ENCODE measurements at regions of chr11 and their contacts with region 1.

Region 1: DNA sequence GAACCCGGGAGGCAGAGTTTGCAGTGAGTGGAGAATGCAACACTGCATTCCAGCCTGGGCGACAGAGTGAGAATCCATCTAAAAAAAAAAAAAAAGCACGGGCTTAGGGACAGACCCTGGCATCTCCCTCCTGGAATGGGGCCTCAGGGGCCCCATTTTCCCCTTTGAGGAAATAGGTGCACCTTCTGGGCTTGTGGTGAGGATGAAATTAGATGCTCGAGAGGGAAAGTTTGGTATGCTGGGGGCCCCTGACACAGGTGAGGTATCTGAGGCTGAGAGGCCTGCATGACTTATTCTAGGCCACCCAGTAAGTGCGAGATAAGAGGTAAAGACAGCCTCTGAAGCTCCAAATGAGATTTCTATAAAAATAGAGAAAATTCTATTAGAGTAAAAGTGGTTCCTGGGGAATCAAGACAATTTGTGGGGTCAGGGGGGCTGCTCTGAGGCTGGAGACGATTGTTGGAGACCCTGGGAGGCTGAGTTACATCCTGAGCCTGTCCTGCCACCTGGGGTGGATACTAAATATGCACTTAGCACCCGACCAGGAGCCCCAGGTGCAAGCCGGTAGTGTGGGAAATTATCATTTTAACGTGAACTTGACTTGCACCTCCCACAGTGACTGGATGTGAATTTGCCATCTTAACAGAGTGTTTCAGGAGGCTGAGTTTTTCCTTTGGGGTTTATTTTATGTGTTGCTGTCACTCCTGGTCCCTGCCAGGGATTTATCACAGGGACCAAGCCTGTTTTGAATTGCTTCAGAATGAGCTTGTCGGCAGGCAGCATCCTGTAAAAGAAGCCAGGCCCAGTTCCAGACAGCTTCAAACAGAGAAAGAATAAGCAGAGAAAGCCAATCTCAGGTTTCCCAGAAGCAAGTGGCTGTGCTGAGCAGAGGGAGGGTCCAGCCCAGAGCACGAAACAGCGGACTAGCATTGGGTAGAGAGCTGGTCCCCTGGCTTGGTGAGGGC is 48.4 kb upstream of the TSKU start:
- DNase-seq: peak in 1 of 4 experiments; percentile 18
- ATAC-seq: peak; percentile 6; the same call in 2 of the 3 replicates
- H3K4me3 ChIP-seq: no peak overlapping the region
- H3K27ac ChIP-seq: no peak overlapping the region
- H3K4me1 ChIP-seq: peaks cover 29 to 35% of the 10 kb centered on the region in 2 experiments
- H3K27me3 ChIP-seq: no peaks in the 10 kb centered on the region
- CTCF ChIP-seq: no peak
- EP300 ChIP-seq: no peak
- POLR2A ChIP-seq: no peak
- RAD21 ChIP-seq: no peak

Region 2: GRCh38 chr11:75814686-75815344 is 919.9 kb before region 1 on chr11 and contains the start of gene UVRAG:
- CTCF ChIA-PET with region 1: no interaction called
- POLR2A ChIA-PET with region 1: no interaction called
- in situ Hi-C with region 1: no loop called
- intact Hi-C with region 1: no loop called
- DNase-seq: peak; percentile 98 to 100 (median 98)
- ATAC-seq: peak; percentile 96
- H3K4me3 ChIP-seq: peak within 1 kb of the TSS; percentile 87
- H3K27ac ChIP-seq: peak within 1 kb of the TSS; percentile 79
- H3K4me1 ChIP-seq: peaks cover 14 to 28% of the 10 kb centered on the region in 2 experiments
- H3K27me3 ChIP-seq: no peaks in the 10 kb centered on the region
- CTCF ChIP-seq: peak in 1 of 3 experiments; percentile 9; a peak in 1 of 6 replicates
- EP300 ChIP-seq: no peak; the same call in 1 of the 2 replicates
- POLR2A ChIP-seq: peak; percentile 87
- RAD21 ChIP-seq: no peak; a peak in 1 of 4 replicates
- polyA plus RNA-seq, gene UVRAG: 3.1 to 5.2 TPM

Region 3: GRCh38 chr11:76397383-76397782 is 337.4 kb before region 1 on chr11:
- CTCF ChIA-PET with region 1: no interaction called
- POLR2A ChIA-PET with region 1: no interaction called
- in situ Hi-C with region 1: no loop called
- intact Hi-C with region 1: no loop called
- DNase-seq: no peak
- ATAC-seq: no peak
- H3K4me3 ChIP-seq: no peak overlapping the region
- H3K27ac ChIP-seq: no peak overlapping the region
- H3K4me1 ChIP-seq: no peaks in the 10 kb centered on the region
- H3K27me3 ChIP-seq: peaks cover 2 to 6% of the 10 kb centered on the region in 2 experiments; a peak in 3 of 5 replicates
- CTCF ChIP-seq: no peak
- EP300 ChIP-seq: no peak
- POLR2A ChIP-seq: no peak
- RAD21 ChIP-seq: no peak

Region 4: GRCh38 chr11:76700177-76701100 is 34.3 kb before region 1 on chr11:
- CTCF ChIA-PET with region 1: no interaction called
- POLR2A ChIA-PET with region 1: interaction called, 3 read pairs
- in situ Hi-C with region 1: no loop called
- intact Hi-C with region 1: loop called (anchors 1 kb)
- DNase-seq: peak; percentile 91 to 96 (median 92)
- ATAC-seq: peak; percentile 83
- H3K4me3 ChIP-seq: no peak overlapping the region
- H3K27ac ChIP-seq: peak overlapping the region; percentile 90
- H3K4me1 ChIP-seq: peaks cover 61 to 67% of the 10 kb centered on the region in 2 experiments
- H3K27me3 ChIP-seq: no peaks in the 10 kb centered on the region
- CTCF ChIP-seq: no peak
- EP300 ChIP-seq: peak; percentile 97
- POLR2A ChIP-seq: peak; percentile 37; the same call in 1 of the 2 replicates
- RAD21 ChIP-seq: 0 out of 4 replicates have a peak, but pooled peaks of 1 of the 2 experiments have one; percentile 2

Region 5: DNA sequence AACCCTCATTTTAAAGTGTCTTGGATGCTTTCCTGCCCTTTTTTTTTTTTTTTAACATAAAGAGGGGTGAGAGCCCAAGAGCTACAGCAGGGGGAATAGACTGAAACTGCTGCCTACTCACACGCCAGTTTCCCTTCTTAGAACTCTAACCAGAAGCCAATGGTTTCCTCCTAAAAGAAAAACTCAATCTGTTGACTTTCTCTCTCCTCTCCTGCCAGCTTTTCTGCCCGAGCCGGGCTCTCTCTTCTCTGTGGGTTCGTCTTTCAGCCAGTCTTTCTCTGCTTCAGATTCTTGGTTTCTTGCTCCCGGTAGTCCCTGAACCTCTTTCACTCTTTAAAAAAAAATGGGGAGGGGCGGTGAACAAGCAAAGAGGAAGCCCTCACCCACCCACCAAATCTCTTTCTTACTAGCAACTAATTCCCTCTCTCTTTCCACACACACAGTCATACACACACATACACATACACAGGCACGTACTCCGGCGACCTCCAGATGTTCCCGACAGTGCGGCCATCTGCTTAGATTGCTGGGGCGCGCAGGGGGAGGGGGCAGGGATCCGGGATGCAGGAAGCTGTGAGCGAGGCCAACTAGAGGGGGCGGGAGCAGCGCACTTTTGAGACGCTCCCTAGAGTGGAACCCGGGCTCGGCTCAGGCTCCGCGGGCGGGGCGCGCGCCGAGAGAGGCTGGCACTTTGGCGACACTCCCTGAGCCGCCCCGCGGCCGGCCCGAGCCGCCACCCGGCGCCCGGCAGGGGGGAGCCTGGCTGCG is 48.0 kb after region 1 on chr11:
- CTCF ChIA-PET with region 1: interaction called, 3 read pairs
- POLR2A ChIA-PET with region 1: interaction called, 5 read pairs
- in situ Hi-C with region 1: loop called (anchors 5 kb)
- intact Hi-C with region 1: no loop called
- DNase-seq: peak; percentile 92 to 95 (median 92)
- ATAC-seq: peak; percentile 78
- H3K4me3 ChIP-seq: peak overlapping the region; percentile 71
- H3K27ac ChIP-seq: peak overlapping the region; percentile 50; the same call in 2 of the 3 replicates
- H3K4me1 ChIP-seq: peaks cover 33 to 49% of the 10 kb centered on the region in 2 experiments
- H3K27me3 ChIP-seq: no peaks in the 10 kb centered on the region
- CTCF ChIP-seq: no peak; a peak in 1 of 6 replicates
- EP300 ChIP-seq: no peak; the same call in 1 of the 2 replicates
- POLR2A ChIP-seq: peak; percentile 76
- RAD21 ChIP-seq: no peak

Region 6: GRCh38 chr11:76807206-76807875 is 72.6 kb after region 1 on chr11:
- CTCF ChIA-PET with region 1: interaction called, 3 read pairs
- POLR2A ChIA-PET with region 1: interaction called, 4 read pairs
- in situ Hi-C with region 1: no loop called
- intact Hi-C with region 1: loop called (anchors 2 kb)
- DNase-seq: peak; percentile 84 to 92 (median 86)
- ATAC-seq: peak; percentile 98
- H3K4me3 ChIP-seq: no peak overlapping the region
- H3K27ac ChIP-seq: no peak overlapping the region
- H3K4me1 ChIP-seq: peaks cover 10 to 20% of the 10 kb centered on the region in 2 experiments; a peak in 4 of 5 replicates
- H3K27me3 ChIP-seq: no peaks in the 10 kb centered on the region
- CTCF ChIP-seq: peak; percentile 85 to 89 (median 89)
- EP300 ChIP-seq: no peak
- POLR2A ChIP-seq: no peak
- RAD21 ChIP-seq: peak; percentile 71 to 86

Region 7: GRCh38 chr11:76860539-76861475 is 126.1 kb after region 1 on chr11 and contains the start of gene ACER3:
- CTCF ChIA-PET with region 1: no interaction called
- POLR2A ChIA-PET with region 1: no interaction called
- in situ Hi-C with region 1: no loop called
- intact Hi-C with region 1: no loop called
- DNase-seq: peak; percentile 96 to 99 (median 99)
- ATAC-seq: peak; percentile 97
- H3K4me3 ChIP-seq: peak within 1 kb of the TSS; percentile 94
- H3K27ac ChIP-seq: peak within 1 kb of the TSS; percentile 88
- H3K4me1 ChIP-seq: peaks cover 16 to 23% of the 10 kb centered on the region in 2 experiments; a peak in 4 of 5 replicates
- H3K27me3 ChIP-seq: no peaks in the 10 kb centered on the region
- CTCF ChIP-seq: peak in 1 of 3 experiments; percentile 26; a peak in 1 of 6 replicates
- EP300 ChIP-seq: no peak
- POLR2A ChIP-seq: peak; percentile 83
- RAD21 ChIP-seq: no peak
- polyA plus RNA-seq, gene ACER3: 2.0 to 3.0 TPM

Region 8: DNA sequence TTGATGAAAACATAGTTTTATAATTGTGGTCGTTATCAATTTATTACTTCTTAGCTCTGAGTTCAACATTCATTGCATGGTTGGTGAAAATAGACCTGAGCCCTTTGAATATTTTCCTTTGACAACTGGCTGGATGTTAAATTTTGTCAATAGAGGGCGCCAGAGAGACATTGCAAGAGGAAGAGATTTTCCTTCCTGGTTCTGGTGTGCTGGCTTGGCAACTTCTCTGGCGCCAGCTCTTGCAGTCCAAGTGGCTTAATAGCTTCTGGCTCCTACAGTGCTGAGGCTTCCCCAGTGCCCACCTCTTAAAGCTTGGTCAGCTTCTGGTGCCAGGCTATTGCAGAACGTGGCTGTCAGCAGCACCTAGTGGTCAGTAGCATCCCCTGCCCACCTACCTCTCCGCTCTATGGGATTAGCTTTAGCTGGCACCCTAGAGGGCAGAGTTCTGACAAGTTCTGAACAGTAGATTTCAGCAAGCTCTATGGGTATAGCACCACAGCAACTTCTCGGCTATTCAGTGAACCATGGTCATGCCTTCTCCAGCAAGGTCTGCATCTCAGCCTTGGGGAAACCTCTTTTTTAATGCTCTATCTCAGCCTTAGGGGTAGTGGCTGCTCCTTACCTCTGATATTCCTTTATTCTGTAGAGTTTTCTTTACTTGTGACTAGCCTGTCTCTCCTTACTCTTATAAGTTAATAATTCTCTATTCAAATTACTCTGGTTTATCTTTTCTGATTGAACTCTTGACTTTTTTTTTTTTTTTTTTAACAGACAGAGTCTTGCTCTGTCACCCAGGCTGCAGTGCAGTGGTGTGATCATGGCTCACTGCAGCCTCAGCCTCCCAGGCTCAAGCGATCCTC is 185.4 kb after region 1 on chr11:
- CTCF ChIA-PET with region 1: interaction called, 20 read pairs
- POLR2A ChIA-PET with region 1: no interaction called
- in situ Hi-C with region 1: loop called (anchors 5 kb)
- intact Hi-C with region 1: loop called (anchors 1 kb)
- DNase-seq: peak; percentile 61 to 87 (median 64)
- ATAC-seq: peak; percentile 85
- H3K4me3 ChIP-seq: no peak overlapping the region
- H3K27ac ChIP-seq: no peak overlapping the region
- H3K4me1 ChIP-seq: peaks cover 9 to 19% of the 10 kb centered on the region in 2 experiments; a peak in 4 of 5 replicates
- H3K27me3 ChIP-seq: no peaks in the 10 kb centered on the region
- CTCF ChIP-seq: peak; percentile 90 to 94 (median 93)
- EP300 ChIP-seq: no peak
- POLR2A ChIP-seq: no peak
- RAD21 ChIP-seq: peak; percentile 73 to 76

Region 9: DNA sequence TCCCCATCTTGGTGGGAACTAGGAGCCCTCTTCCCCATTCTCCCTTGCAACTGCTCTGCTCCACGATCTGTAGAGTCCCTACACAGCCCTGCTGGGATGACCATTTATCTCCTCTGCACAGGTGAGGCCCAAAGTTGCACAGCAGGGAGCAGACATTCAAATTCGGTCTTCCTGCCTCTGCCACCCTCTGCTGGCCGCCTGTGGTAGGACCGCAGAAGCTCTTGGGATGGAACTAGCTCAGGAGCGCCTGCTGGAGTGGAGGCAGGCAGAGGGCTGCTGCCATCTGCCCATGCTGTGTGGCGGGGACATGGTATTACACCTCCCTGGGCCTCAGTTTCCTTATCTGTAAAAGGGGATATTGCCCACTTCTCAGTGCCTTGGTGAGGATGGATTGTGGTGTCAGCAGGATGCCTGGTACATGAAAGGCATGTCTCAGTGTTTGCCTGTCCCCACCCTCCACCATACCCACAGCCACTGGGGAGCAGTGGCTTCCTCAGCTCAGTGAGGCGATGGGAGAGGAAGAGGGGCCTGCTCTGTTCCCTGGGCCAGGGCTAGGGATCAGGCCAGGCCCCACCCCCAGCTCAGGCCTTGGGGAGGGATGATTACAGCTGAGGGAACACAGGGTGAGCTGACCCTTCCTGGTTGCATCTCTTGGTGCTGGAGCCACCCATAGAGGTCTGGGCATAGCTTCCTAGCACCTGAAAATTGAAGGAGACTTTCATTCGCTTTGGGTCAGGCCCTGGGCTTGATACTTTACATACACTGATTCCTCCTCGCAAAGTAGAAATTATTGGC is 356.6 kb after region 1 on chr11:
- CTCF ChIA-PET with region 1: interaction called, 6 read pairs
- POLR2A ChIA-PET with region 1: interaction called, 3 read pairs
- in situ Hi-C with region 1: no loop called
- intact Hi-C with region 1: loop called (anchors 5 kb)
- DNase-seq: peak; percentile 82 to 87 (median 85)
- ATAC-seq: peak; percentile 95
- H3K4me3 ChIP-seq: no peak overlapping the region
- H3K27ac ChIP-seq: no peak overlapping the region
- H3K4me1 ChIP-seq: peaks cover 0 to 20% of the 10 kb centered on the region in 2 experiments; a peak in 3 of 5 replicates
- H3K27me3 ChIP-seq: peaks cover 0 to 30% of the 10 kb centered on the region in 2 experiments; a peak in 3 of 5 replicates
- CTCF ChIP-seq: peak; percentile 96 to 99 (median 98)
- EP300 ChIP-seq: no peak
- POLR2A ChIP-seq: no peak
- RAD21 ChIP-seq: peak; percentile 89 to 91

Region 10: DNA sequence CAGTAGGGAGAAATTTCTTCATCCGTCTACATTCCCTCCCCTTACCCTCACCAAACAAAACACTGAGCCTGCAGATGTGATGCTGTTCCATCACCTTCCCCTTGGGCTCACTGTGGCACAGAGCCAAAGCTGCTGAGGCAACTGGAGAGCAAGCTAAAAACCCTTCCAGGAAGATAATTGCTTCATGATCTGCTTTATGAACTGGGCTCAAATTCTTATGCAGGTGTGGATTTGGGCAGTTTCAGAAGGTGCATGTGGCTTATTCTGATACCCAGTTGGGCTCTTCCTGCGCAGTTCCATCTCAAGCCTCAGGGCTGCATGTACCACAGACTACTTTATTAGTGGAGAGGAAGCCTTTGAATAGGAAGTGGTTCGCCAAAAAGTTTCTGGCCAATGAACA is 1144.5 kb after region 1 on chr11:
- CTCF ChIA-PET with region 1: no interaction called
- POLR2A ChIA-PET with region 1: no interaction called
- in situ Hi-C with region 1: no loop called
- intact Hi-C with region 1: no loop called
- DNase-seq: peak in 1 of 4 experiments; percentile 12
- ATAC-seq: peak; percentile 60
- H3K4me3 ChIP-seq: no peak overlapping the region
- H3K27ac ChIP-seq: no peak overlapping the region
- H3K4me1 ChIP-seq: peaks cover 0 to 2% of the 10 kb centered on the region in 2 experiments; a peak in 2 of 5 replicates
- H3K27me3 ChIP-seq: no peaks in the 10 kb centered on the region
- CTCF ChIP-seq: no peak
- EP300 ChIP-seq: no peak
- POLR2A ChIP-seq: no peak
- RAD21 ChIP-seq: no peak